ENCODE measurements at regions of chr6 and their contacts with region 1.

Region 1: GRCh38 chr6:110543106-110543505 is 66.7 kb upstream of the SLC22A16 start:
- DNase-seq: no peak
- ATAC-seq: peak; percentile 26

Region 2: DNA sequence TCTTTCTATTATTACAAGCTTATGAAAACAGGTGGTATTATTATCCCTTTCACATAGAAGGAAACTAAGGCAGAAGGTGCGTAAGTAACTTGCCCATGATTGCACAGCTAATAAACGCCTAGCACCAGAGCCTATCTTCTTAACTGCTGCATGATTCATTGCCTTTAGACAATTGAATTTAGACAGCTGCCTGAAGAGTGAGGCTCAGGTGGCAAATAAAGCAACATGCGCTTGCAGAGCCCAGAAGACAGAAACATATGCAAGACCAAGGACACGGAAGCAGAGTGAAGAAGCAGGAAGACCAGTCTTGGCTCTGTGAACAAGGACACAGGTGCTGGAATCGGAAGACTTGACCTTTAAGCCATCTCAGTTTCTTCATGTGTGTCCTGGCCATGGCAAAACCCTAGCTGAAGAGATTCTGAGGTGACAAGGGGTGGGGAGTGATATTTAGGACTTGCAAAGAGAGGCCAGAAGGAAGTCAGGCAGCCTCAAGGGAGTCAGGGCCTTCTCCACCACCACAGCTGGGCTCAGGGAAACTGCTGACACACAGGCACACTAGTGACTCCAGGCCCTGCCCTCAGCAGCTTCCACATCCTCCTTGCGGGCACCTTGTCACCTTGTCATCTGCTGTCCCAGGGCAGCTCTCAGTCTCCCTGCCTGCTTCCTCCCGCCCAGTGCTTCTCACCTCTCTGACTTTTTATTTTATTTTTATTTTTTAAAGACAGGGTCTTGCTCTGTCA is 25.0 kb after region 1 on chr6:
- intact Hi-C with region 1: loop called (anchors 1 kb)
- DNase-seq: no peak
- ATAC-seq: no peak

Region 3: GRCh38 chr6:110597761-110598160 is 54.7 kb after region 1 on chr6:
- intact Hi-C with region 1: no loop called
- DNase-seq: no peak
- ATAC-seq: no peak

Region 4: GRCh38 chr6:110628330-110628729 is 85.2 kb after region 1 on chr6:
- intact Hi-C with region 1: loop called (anchors 10 kb)
- DNase-seq: no peak
- ATAC-seq: no peak

Region 5: DNA sequence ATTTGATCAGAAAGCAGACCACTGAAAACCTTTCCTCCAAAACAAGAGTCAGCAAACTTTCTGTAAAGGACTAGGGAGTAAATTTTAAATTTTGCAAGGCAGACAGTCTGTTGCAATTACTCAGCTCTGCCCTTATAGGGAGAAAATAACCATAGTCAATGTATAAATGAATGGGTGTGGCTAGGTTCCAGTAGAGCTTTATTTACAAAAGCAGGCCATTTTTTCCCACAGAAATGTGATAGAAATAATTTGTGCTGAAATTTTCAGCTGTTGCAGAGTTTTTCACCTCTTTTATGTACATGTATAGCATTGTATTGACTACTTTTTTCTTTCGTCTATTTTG is 339.1 kb after region 1 on chr6:
- intact Hi-C with region 1: loop called (anchors 5 kb)
- DNase-seq: no peak
- ATAC-seq: no peak

Measured in Right ventricle myocardium inferior (tissue), 1 donor.